ENCODE measurements at regions of chr13 and their contacts with region 1.

Region 1: GRCh38 chr13:89695343-89696257 is 1651.9 kb upstream of the MIR17HG start:
- DNase-seq: peak; percentile 66
- ATAC-seq: peak; percentile 93
- H3K4me3 Mint-ChIP-seq: no peak overlapping the region
- H3K27ac Mint-ChIP-seq: no peak overlapping the region
- H3K4me1 Mint-ChIP-seq: peaks cover 5% of the 10 kb centered on the region; the same call in 1 of the 2 replicates
- H3K27me3 Mint-ChIP-seq: no peaks in the 10 kb centered on the region
- CTCF ChIP-seq: peak; percentile 68

Region 2: DNA sequence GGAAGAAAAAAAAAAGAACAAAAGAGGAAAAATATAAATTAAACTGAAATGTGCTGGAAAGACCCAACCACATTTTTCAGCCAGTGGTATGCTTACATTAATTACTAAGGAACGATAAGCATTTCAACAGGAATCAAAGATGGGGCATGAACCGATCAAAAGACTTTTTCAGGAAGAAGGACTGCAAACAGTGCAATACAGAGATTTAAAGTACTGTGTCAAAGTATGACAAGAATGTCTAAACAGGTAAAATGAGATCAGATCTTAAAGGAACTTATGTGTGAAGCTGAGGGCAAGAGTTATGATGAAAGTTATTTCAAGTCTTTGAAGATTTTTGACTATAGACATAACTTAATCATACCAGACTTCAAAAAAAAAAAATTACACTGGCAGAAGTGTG is 262.6 kb before region 1 on chr13:
- CTCF ChIA-PET with region 1: interaction called, 19 read pairs
- POLR2A ChIA-PET with region 1: no interaction called
- DNase-seq: no peak
- ATAC-seq: no peak
- H3K4me3 Mint-ChIP-seq: no peak overlapping the region
- H3K27ac Mint-ChIP-seq: no peak overlapping the region
- H3K4me1 Mint-ChIP-seq: no peaks in the 10 kb centered on the region
- H3K27me3 Mint-ChIP-seq: no peaks in the 10 kb centered on the region
- CTCF ChIP-seq: no peak

Measured in WTC11 (cell line).